ENCODE measurements at regions of chr6 and their contacts with region 1.

Region 1: DNA sequence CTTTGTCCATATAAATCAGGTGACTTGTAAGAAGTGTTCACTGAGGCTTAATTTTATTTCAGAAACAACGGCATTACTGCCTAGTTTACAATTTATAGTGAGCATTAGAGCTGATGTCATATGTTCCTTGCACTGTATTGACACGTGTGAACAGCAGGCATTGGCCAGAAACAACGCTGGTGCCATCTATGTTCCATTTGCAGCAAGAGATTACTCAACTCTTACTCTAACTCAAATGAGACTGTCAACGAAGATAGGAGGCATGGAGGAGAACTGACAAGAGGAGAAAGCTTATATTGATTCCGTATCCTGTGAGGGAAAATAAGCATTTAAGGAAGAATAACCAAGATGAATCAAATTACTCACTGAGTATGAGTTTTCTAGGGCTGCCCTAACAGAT is 48.4 kb downstream of the MTFR2 start:
- DNase-seq: no peak
- ATAC-seq: no peak
- H3K4me3 ChIP-seq: no peak overlapping the region
- H3K4me3 Mint-ChIP-seq: no peak overlapping the region
- H3K27ac ChIP-seq: no peak overlapping the region
- H3K27ac Mint-ChIP-seq: no peak overlapping the region
- H3K4me1 ChIP-seq: no peaks in the 10 kb centered on the region
- H3K4me1 Mint-ChIP-seq: no peaks in the 10 kb centered on the region
- H3K27me3 ChIP-seq: no peaks in the 10 kb centered on the region
- H3K27me3 Mint-ChIP-seq: peaks cover 4% of the 10 kb centered on the region
- CTCF ChIP-seq: no peak

Region 2: DNA sequence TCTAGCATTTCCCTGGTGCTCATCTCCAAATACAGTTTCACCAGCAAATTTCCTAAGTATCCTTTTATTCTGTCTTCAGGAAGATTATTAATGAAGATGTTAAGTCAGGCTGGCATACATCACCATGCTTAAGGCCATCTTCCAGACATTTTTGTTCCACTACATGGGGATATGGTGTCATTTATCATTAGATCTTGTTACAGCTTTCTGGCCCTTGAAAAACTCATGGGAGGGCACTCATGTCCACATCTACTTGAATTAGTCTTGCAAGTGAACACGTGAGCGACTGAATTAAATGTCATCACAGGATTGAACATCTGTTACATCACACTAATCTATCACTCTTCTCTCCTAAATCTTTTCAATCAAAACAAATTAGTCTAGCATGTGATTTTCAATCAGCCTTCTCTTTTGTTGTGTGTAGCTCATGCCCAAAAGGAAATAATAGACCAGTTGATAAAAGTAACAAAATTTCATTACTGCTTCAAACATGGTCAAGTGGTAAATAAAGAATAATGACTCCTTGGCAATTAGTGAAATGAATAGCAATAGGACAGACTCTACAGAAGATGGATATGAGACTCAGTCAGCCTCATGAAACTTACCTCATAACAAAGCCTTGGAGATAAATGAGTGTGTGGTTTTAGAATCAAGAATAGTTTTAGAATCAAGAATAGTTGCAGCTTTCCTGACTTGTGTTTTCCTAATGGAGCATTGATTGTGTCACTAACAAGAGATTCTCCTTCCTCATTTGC is 32.2 kb before region 1 on chr6:
- CTCF ChIA-PET with region 1: no interaction called
- POLR2A ChIA-PET with region 1: no interaction called
- intact Hi-C with region 1: loop called in 1 of 2 experiments (anchors 2 kb)
- DNase-seq: no peak
- ATAC-seq: no peak
- H3K4me3 ChIP-seq: no peak overlapping the region
- H3K4me3 Mint-ChIP-seq: no peak overlapping the region
- H3K27ac ChIP-seq: no peak overlapping the region
- H3K27ac Mint-ChIP-seq: no peak overlapping the region
- H3K4me1 ChIP-seq: no peaks in the 10 kb centered on the region
- H3K4me1 Mint-ChIP-seq: no peaks in the 10 kb centered on the region
- H3K27me3 ChIP-seq: no peaks in the 10 kb centered on the region
- H3K27me3 Mint-ChIP-seq: peaks cover 2% of the 10 kb centered on the region
- CTCF ChIP-seq: no peak

Measured in CD8-positive, alpha-beta T cell (primary cell).